Posterior vena cava (tissue), 2 donors: ENCODE measurements at regions of chr3 and their contacts with region 1.

Region 1: GRCh38 chr3:146160964-146161662 is at the start of gene PLOD2:
- DNase-seq: peak; percentile 95
- total RNA-seq, gene PLOD2: 63.8 to 64.1 TPM

Region 2: DNA sequence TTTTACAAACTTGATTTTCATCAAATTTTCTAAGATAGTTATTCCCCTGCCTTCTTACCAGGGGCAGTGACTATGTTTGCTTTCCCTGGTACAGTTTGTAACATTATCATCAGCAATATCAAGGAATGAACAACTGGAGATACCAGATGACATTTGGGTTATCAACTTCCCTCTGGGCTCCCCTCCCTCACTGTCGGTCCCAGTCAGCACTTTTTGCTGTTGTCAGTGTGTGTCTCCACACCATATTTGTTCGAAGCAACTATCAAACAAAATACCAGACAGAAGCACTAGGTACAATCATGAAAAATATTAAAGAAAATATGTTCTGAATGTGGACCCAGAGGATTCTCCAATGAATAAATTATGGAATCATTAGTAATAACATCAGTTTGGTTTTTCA is 75.4 kb before region 1 on chr3:
- intact Hi-C with region 1: loop called in 1 of 2 experiments (anchors 10 kb)
- DNase-seq: no peak

Region 3: DNA sequence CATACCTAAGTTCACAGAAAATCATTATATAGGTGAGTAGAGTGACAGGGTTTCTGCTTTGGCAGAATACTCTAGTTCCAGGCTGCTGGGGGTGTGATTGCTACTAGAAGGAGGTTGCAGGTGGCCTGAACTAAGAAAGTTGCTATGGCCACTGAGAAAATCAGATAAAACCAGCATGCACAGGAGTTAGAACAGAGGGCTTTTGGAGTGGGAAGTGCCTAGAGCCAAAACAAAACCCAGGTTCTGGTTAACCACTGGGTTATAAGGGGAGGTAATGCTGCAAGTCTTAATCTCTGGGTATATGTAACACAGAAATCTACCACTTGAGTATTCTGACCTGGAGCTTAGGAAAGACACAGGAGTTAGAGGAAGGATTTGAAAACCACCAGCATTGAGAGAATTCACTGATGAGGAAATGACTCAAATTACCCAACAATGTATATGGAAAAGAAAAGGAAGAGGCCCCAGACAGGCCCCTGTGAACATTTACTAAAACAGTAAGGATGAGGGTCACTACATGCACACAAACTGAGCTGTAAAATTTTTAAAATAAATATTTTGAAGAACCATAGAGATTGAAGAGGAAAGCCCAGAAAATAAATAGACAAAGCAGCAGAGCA is 60.2 kb before region 1 on chr3:
- intact Hi-C with region 1: no loop called
- DNase-seq: no peak

Region 4: GRCh38 chr3:146117406-146118285 is 43.5 kb before region 1 on chr3:
- intact Hi-C with region 1: no loop called
- DNase-seq: no peak

Region 5: DNA sequence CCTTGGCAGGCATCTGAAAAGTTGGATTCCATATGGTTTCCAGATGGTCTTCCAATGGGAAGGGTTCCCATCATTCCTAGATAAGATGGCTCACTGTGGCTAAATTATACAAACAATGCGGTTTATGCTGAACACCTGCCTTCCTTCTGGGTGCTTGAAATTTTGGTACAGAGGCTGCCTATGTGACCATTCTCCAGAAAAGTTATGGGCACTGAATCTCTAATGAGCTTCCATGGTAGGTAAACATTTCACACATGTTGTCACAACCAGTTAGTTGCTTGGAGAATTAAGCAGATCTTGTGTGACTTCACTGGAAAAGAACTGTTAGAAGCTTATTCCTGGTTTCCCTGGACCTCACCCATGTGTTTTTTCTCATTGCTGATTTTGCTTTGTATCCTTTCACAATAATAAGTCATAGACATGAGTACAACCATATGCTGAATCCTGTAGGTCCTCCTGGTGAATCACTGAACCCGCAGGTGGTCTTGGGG is 30.2 kb before region 1 on chr3:
- intact Hi-C with region 1: no loop called
- DNase-seq: no peak